Caco-2 (cell line): ENCODE measurements at regions of chr16 and their contacts with region 1.

Region 1: DNA sequence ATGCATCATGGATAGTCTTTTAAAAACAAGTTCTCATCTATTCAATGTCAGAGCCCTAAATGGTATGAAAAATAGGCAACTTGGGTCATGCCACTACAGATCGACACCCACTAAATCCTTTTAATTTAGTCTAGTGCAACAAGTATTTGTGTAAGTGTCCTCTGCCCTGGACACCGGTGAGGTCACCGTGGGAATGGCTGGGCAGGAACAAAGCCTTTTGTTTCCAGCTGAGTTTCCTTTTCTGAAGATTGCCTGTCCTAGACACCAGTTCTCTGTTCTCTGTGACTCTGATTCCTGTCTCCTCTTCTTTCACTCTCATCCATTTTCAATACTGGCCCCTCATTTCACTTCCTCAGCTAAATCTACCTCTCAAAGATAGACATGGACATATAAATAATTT is 446.5 kb downstream of the MAF start:
- DNase-seq: no peak
- H3K4me3 ChIP-seq: no peak overlapping the region
- H3K4me3 Mint-ChIP-seq: no peak overlapping the region
- H3K27ac Mint-ChIP-seq: no peak overlapping the region
- H3K4me1 ChIP-seq: peaks cover 35% of the 10 kb centered on the region
- H3K4me1 Mint-ChIP-seq: peaks cover 6% of the 10 kb centered on the region
- H3K27me3 ChIP-seq: no peaks in the 10 kb centered on the region
- H3K27me3 Mint-ChIP-seq: no peaks in the 10 kb centered on the region
- CTCF ChIP-seq: no peak

Region 2: GRCh38 chr16:79104567-79104966 is 49.5 kb before region 1 on chr16:
- CTCF ChIA-PET with region 1: no interaction called
- POLR2A ChIA-PET with region 1: no interaction called
- intact Hi-C with region 1: no loop called
- DNase-seq: peak in 1 of 2 experiments; percentile 14
- H3K4me3 ChIP-seq: no peak overlapping the region
- H3K4me3 Mint-ChIP-seq: no peak overlapping the region
- H3K27ac Mint-ChIP-seq: no peak overlapping the region
- H3K4me1 ChIP-seq: peaks cover 7% of the 10 kb centered on the region; the same call in 1 of the 2 replicates
- H3K4me1 Mint-ChIP-seq: no peaks in the 10 kb centered on the region
- H3K27me3 ChIP-seq: no peaks in the 10 kb centered on the region
- H3K27me3 Mint-ChIP-seq: peaks cover 2% of the 10 kb centered on the region
- CTCF ChIP-seq: no peak

Region 3: GRCh38 chr16:79137396-79137939 is 16.6 kb before region 1 on chr16:
- CTCF ChIA-PET with region 1: interaction called, 11 read pairs
- POLR2A ChIA-PET with region 1: no interaction called
- intact Hi-C with region 1: no loop called
- DNase-seq: no peak
- H3K4me3 ChIP-seq: no peak overlapping the region
- H3K4me3 Mint-ChIP-seq: no peak overlapping the region
- H3K27ac Mint-ChIP-seq: no peak overlapping the region
- H3K4me1 ChIP-seq: no peaks in the 10 kb centered on the region
- H3K4me1 Mint-ChIP-seq: peaks cover 9% of the 10 kb centered on the region
- H3K27me3 ChIP-seq: no peaks in the 10 kb centered on the region
- H3K27me3 Mint-ChIP-seq: no peaks in the 10 kb centered on the region
- CTCF ChIP-seq: no peak

Region 4: DNA sequence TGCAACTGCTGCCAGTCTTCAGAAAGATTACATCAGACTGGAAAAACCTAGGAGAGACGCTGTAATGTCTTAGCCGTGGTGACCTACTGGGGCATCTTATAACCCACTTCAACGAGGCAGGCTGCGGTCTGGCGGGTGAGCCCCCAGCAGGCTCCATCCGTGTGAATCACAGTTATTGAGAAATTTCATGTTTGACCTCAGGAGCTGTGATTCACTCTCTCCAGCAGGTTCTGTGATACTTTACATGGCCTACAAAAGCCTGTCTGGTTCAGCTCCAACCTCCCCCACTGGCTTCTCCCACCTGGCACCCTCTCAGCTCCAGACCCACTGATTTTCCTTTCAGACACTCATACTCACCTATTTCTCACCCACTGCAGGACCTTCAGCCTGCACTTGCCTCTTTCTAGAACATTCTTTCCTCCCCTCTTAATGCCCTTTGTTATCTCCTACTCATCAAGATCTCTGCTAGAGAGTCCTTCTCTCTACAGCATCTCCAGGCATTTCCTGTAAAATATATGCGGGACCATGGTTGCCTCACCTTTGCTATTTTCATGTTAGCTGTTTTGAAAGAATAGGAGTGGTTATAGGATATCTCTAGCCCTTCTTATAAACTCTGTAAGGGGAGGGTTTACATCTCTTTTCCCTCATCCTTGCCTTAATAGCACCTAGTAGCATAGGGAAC is 218.6 kb after region 1 on chr16:
- CTCF ChIA-PET with region 1: no interaction called
- POLR2A ChIA-PET with region 1: no interaction called
- intact Hi-C with region 1: no loop called
- DNase-seq: no peak
- H3K4me3 ChIP-seq: no peak overlapping the region
- H3K4me3 Mint-ChIP-seq: no peak overlapping the region
- H3K27ac Mint-ChIP-seq: no peak overlapping the region
- H3K4me1 ChIP-seq: no peaks in the 10 kb centered on the region
- H3K4me1 Mint-ChIP-seq: no peaks in the 10 kb centered on the region
- H3K27me3 ChIP-seq: no peaks in the 10 kb centered on the region
- H3K27me3 Mint-ChIP-seq: no peaks in the 10 kb centered on the region
- CTCF ChIP-seq: no peak